Heart right ventricle (tissue), 16 donors: ENCODE measurements at regions of chr19 and their contacts with region 1.

Region 1: DNA sequence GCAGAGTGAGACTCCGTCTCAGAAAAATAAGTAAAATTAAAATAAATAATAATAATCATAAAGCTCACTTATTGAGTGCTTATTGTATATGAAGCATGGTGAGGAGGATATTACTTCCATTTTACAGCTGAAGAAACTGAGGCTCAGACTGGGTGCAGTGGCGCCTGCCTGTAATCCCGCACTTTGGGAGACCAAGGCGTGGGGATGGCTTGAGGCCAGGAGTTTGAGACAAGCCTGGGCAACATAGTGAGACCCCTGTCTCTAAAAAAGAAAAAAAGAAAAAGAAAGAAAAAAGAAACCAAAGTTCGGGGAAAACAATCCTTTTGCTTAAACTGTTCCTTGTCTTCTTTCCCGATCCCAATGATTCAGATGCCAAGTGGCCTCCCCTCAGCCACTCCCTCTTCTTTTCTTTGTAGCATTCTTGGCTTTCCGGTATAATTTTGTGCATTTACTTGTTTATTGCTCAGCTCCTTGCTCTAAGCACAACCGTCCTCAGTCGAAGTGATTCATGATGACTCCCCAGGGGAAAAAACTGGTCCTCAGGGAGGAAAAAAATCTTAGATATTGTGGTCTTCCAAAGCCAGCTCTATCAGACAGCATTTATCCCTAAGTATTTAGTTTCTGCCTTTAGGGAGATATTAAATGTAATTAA is 965 bp upstream of the EIF3G start:
- DNase-seq: no peak
- ATAC-seq: peak in 1 of 8 donors; percentile 30
- H3K4me3 ChIP-seq: peak overlapping the region in 3 of 10 donors; percentile 83 to 94 (median 93)
- H3K27ac ChIP-seq: peak overlapping the region in 2 of 10 donors; percentile 15 to 48
- H3K4me1 ChIP-seq: peaks cover 8 to 29% (median 16%) of the 10 kb centered on the region in 9 donors
- H3K27me3 ChIP-seq: no peaks in the 10 kb centered on the region
- CTCF ChIP-seq: no peak

Region 2: GRCh38 chr19:10106100-10106936 is 14.3 kb before region 1 on chr19 and contains the start of gene PPAN:
- intact Hi-C with region 1: loop called in 1 of 10 experiments (anchors 1 kb)
- DNase-seq: peak; percentile 97 to 99
- ATAC-seq: peak; percentile 96 to 99 (median 98)
- H3K4me3 ChIP-seq: peak within 1 kb of the TSS; percentile 54 to 87 (median 79)
- H3K27ac ChIP-seq: peak within 1 kb of the TSS in 9 of 10 donors; percentile 69 to 88 (median 85)
- H3K4me1 ChIP-seq: peaks cover 5 to 52% (median 15%) of the 10 kb centered on the region in 9 donors
- H3K27me3 ChIP-seq: no peaks in the 10 kb centered on the region
- CTCF ChIP-seq: peak in 2 of 9 donors; percentile 5 to 18
- total RNA-seq, gene PPAN: 17.6 to 43.3 (median 20.7) TPM